Caco-2 (cell line): ENCODE measurements at regions of chr1 and their contacts with region 1.

Region 1: GRCh38 chr1:212455803-212456528 is 23.2 kb downstream of the NENF start:
- DNase-seq: peak; percentile 82 to 92
- H3K4me3 ChIP-seq: no peak overlapping the region
- H3K4me3 Mint-ChIP-seq: no peak overlapping the region
- H3K27ac Mint-ChIP-seq: no peak overlapping the region
- H3K4me1 ChIP-seq: peaks cover 3% of the 10 kb centered on the region; the same call in 1 of the 2 replicates
- H3K4me1 Mint-ChIP-seq: peaks cover 15% of the 10 kb centered on the region
- H3K27me3 ChIP-seq: no peaks in the 10 kb centered on the region
- H3K27me3 Mint-ChIP-seq: no peaks in the 10 kb centered on the region
- CTCF ChIP-seq: peak; percentile 98

Region 2: GRCh38 chr1:212035123-212035834 is 420.7 kb before region 1 on chr1 and contains the starts of genes DTL and INTS7:
- CTCF ChIA-PET with region 1: interaction called, 27 read pairs
- POLR2A ChIA-PET with region 1: no interaction called
- intact Hi-C with region 1: no loop called
- DNase-seq: peak; percentile 98 to 99
- H3K4me3 ChIP-seq: peak within 1 kb of the TSS; percentile 85
- H3K4me3 Mint-ChIP-seq: peak within 1 kb of the TSS; percentile 96
- H3K27ac Mint-ChIP-seq: peak within 1 kb of the TSS; percentile 96
- H3K4me1 ChIP-seq: no peaks in the 10 kb centered on the region; the same call in 1 of the 2 replicates
- H3K4me1 Mint-ChIP-seq: peaks cover 35% of the 10 kb centered on the region
- H3K27me3 ChIP-seq: no peaks in the 10 kb centered on the region
- H3K27me3 Mint-ChIP-seq: no peaks in the 10 kb centered on the region
- CTCF ChIP-seq: peak; percentile 88 to 89
- total RNA-seq, gene DTL: 20.3 and 23.6 TPM in 2 replicates
- total RNA-seq, gene INTS7: 28.1 and 31.9 TPM in 2 replicates

Region 3: GRCh38 chr1:212070720-212071302 is 385.2 kb before region 1 on chr1:
- CTCF ChIA-PET with region 1: interaction called, 50 read pairs
- POLR2A ChIA-PET with region 1: no interaction called
- intact Hi-C with region 1: no loop called
- DNase-seq: peak in 1 of 2 experiments; percentile 36
- H3K4me3 ChIP-seq: no peak overlapping the region
- H3K4me3 Mint-ChIP-seq: no peak overlapping the region
- H3K27ac Mint-ChIP-seq: no peak overlapping the region
- H3K4me1 ChIP-seq: no peaks in the 10 kb centered on the region
- H3K4me1 Mint-ChIP-seq: no peaks in the 10 kb centered on the region
- H3K27me3 ChIP-seq: no peaks in the 10 kb centered on the region
- H3K27me3 Mint-ChIP-seq: no peaks in the 10 kb centered on the region
- CTCF ChIP-seq: peak; percentile 63 to 70

Region 4: DNA sequence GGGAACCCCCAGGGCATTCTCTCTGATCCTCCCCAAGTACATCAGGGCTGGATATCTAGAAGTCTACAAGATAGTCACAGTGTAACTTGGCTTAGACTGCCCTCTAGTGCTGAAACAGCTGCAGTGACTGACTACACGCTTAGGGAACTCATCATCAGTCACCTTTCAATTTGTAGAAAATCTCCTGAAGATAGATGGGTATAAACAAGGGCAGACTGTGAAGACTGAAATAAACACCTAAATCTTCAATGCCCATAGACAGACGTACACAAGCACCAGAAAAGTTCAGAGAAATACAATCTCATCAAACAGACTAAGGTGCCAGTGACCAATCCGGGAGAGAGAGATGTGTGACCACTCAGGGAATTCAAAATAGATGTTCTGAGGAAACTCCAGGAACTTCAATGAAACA is 87.9 kb before region 1 on chr1:
- CTCF ChIA-PET with region 1: interaction called, 15 read pairs
- POLR2A ChIA-PET with region 1: no interaction called
- intact Hi-C with region 1: loop called (anchors 1 kb)
- DNase-seq: peak; percentile 73 to 76
- H3K4me3 ChIP-seq: no peak overlapping the region
- H3K4me3 Mint-ChIP-seq: no peak overlapping the region
- H3K27ac Mint-ChIP-seq: peak overlapping the region; percentile 56
- H3K4me1 ChIP-seq: 0 out of 2 replicates have a peak, but pooled peaks cover 5% of the 10 kb centered on the region
- H3K4me1 Mint-ChIP-seq: no peaks in the 10 kb centered on the region
- H3K27me3 ChIP-seq: no peaks in the 10 kb centered on the region
- H3K27me3 Mint-ChIP-seq: no peaks in the 10 kb centered on the region
- CTCF ChIP-seq: peak; percentile 86

Region 5: GRCh38 chr1:212432706-212433576 is 23.0 kb before region 1 on chr1 and contains the start of gene NENF:
- CTCF ChIA-PET with region 1: interaction called, 10 read pairs
- POLR2A ChIA-PET with region 1: no interaction called
- intact Hi-C with region 1: loop called (anchors 2 kb)
- DNase-seq: peak; percentile 81 to 92
- H3K4me3 ChIP-seq: peak within 1 kb of the TSS; percentile 64
- H3K4me3 Mint-ChIP-seq: peak within 1 kb of the TSS; percentile 79
- H3K27ac Mint-ChIP-seq: peak within 1 kb of the TSS; percentile 88
- H3K4me1 ChIP-seq: peaks cover 38% of the 10 kb centered on the region
- H3K4me1 Mint-ChIP-seq: peaks cover 45% of the 10 kb centered on the region
- H3K27me3 ChIP-seq: no peaks in the 10 kb centered on the region
- H3K27me3 Mint-ChIP-seq: no peaks in the 10 kb centered on the region
- CTCF ChIP-seq: no peak
- total RNA-seq, gene NENF: 90.1 and 95.7 TPM in 2 replicates

Region 6: GRCh38 chr1:212507369-212507768 is 51.4 kb after region 1 on chr1:
- CTCF ChIA-PET with region 1: no interaction called
- POLR2A ChIA-PET with region 1: no interaction called
- intact Hi-C with region 1: no loop called
- DNase-seq: no peak
- H3K4me3 ChIP-seq: no peak overlapping the region
- H3K4me3 Mint-ChIP-seq: no peak overlapping the region
- H3K27ac Mint-ChIP-seq: no peak overlapping the region
- H3K4me1 ChIP-seq: no peaks in the 10 kb centered on the region
- H3K4me1 Mint-ChIP-seq: no peaks in the 10 kb centered on the region
- H3K27me3 ChIP-seq: no peaks in the 10 kb centered on the region
- H3K27me3 Mint-ChIP-seq: no peaks in the 10 kb centered on the region
- CTCF ChIP-seq: no peak